ENCODE measurements at regions of chr11 and their contacts with region 1.

Region 1: DNA sequence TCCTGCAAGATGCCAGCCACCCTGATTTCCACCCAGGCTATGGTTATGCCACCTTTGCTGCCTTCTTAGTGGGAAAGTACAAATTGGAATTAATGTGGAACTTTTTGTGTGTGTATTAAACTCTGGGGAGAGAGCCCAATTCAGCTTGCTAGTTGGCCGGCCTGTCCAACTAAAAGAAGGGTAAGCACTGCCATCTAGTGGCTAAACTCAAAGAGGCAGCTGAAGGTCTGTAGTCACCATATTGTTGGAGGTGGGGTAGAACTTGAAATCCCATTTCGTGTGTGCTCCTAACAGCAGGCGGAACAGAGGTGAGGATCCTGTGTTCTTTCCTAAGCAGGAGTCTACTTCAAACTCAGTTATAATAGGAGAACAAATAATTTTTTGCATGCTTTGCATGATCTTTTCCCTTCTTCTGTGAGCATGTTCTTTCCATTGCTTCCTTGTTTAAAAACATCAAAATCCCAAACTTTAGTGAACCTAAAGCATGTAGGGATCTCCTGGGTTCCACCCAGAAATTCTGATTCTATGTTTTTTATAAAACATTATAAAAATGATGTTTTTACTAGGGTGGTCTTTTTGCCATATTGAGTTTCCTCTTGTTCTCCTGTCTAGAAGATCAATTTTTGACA is 138.8 kb upstream of the SORL1-AS1 start:
- DNase-seq: peak; percentile 82
- ATAC-seq: peak; percentile 71
- H3K4me3 ChIP-seq: peak overlapping the region; percentile 37; the same call in 1 of the 2 replicates
- H3K27ac ChIP-seq: peak overlapping the region; percentile 75
- H3K4me1 ChIP-seq: peaks cover 47% of the 10 kb centered on the region
- H3K27me3 ChIP-seq: no peaks in the 10 kb centered on the region
- CTCF ChIP-seq: peak; percentile 79 to 92 (median 88)
- EP300 ChIP-seq: no peak
- POLR2A ChIP-seq: no peak
- RAD21 ChIP-seq: peak; percentile 97

Region 2: GRCh38 chr11:121249039-121249663 is 342.4 kb before region 1 on chr11:
- CTCF ChIA-PET with region 1: interaction called, 9 read pairs
- POLR2A ChIA-PET with region 1: interaction called, 6 read pairs
- RAD21 ChIA-PET with region 1: no interaction called
- SMC1A ChIA-PET with region 1: no interaction called
- in situ Hi-C with region 1: loop called (anchors 5 kb)
- intact Hi-C with region 1: loop called (anchors 1 kb)
- DNase-seq: no peak
- ATAC-seq: peak; percentile 91
- H3K4me3 ChIP-seq: no peak overlapping the region
- H3K27ac ChIP-seq: no peak overlapping the region
- H3K4me1 ChIP-seq: no peaks in the 10 kb centered on the region
- H3K27me3 ChIP-seq: no peaks in the 10 kb centered on the region
- CTCF ChIP-seq: peak; percentile 60 to 66 (median 64); a peak in 5 of 6 replicates
- EP300 ChIP-seq: no peak
- POLR2A ChIP-seq: no peak
- RAD21 ChIP-seq: peak; percentile 65

Region 3: GRCh38 chr11:121328967-121329679 is 262.4 kb before region 1 on chr11:
- CTCF ChIA-PET with region 1: interaction called, 56 read pairs
- POLR2A ChIA-PET with region 1: interaction called, 4 read pairs
- RAD21 ChIA-PET with region 1: interaction called, 41 read pairs
- SMC1A ChIA-PET with region 1: interaction called, 16 read pairs
- in situ Hi-C with region 1: no loop called
- intact Hi-C with region 1: no loop called
- DNase-seq: no peak
- ATAC-seq: peak; percentile 68
- H3K4me3 ChIP-seq: no peak overlapping the region
- H3K27ac ChIP-seq: peak overlapping the region; percentile 13; the same call in 1 of the 2 replicates
- H3K4me1 ChIP-seq: peaks cover 18% of the 10 kb centered on the region
- H3K27me3 ChIP-seq: no peaks in the 10 kb centered on the region
- CTCF ChIP-seq: no peak
- EP300 ChIP-seq: no peak
- POLR2A ChIP-seq: no peak
- RAD21 ChIP-seq: no peak

Region 4: DNA sequence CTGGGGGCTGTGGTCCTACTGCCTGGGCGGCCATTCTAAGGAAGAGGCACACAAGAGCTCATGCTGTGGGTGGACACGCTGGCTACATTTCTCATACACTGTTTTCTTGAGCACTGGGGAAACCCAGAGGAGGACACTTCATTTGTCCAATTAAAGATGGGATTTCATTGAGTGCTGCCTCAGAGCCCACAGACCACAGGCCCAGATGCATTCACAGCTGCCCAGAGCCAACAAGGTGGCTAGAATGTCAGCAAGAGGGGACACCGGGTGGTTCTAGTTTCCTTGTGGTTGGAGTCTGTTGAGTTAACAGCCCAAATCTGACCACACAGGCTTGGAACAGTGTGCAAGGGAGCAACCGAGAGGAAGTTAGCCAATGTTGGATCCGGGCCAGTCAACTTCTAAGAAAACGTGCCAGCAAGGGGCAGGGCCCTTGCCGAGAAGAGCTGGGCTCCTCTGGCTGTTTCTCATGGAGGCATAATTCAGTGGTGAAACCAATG is 174.4 kb before region 1 on chr11:
- CTCF ChIA-PET with region 1: interaction called, 3 read pairs
- POLR2A ChIA-PET with region 1: no interaction called
- RAD21 ChIA-PET with region 1: no interaction called
- SMC1A ChIA-PET with region 1: interaction called, 5 read pairs
- in situ Hi-C with region 1: no loop called
- intact Hi-C with region 1: loop called (anchors 1 kb)
- DNase-seq: peak; percentile 92
- ATAC-seq: peak; percentile 87
- H3K4me3 ChIP-seq: no peak overlapping the region
- H3K27ac ChIP-seq: peak overlapping the region; percentile 9; the same call in 1 of the 2 replicates
- H3K4me1 ChIP-seq: peaks cover 45% of the 10 kb centered on the region
- H3K27me3 ChIP-seq: no peaks in the 10 kb centered on the region
- CTCF ChIP-seq: no peak
- EP300 ChIP-seq: peak; percentile 26 to 71; a peak in 2 of 4 replicates
- POLR2A ChIP-seq: no peak
- RAD21 ChIP-seq: no peak

Region 5: DNA sequence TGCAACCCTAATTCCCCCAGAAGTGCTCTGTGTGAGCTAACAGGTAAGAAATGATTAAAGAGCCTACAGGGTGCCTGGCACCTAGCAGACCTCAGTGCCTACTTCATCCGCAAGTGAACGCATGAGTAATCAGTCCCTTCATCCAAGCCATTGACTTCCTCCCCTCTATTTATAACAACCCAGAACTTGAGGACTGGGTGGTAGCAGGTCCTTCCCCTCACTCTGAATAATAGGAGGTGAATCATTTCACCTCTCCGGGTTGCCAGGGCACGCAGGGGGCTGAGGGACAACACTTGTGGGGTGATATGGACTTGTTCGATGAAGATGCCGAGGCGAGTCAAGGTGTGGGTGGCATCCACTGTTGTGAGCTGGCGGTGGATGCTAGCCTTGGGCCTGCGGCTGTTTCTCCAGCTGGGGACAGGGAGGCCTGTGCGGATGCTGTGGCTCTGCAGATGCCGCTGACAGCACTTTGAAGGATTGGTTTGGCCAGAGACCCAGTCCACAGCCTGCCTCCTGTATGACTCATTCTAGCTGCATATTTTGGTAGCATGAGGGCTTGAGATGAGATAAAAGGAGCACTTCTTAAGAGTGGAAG is 127.1 kb before region 1 on chr11:
- CTCF ChIA-PET with region 1: interaction called, 21 read pairs
- POLR2A ChIA-PET with region 1: no interaction called
- RAD21 ChIA-PET with region 1: interaction called, 31 read pairs
- SMC1A ChIA-PET with region 1: interaction called, 27 read pairs
- in situ Hi-C with region 1: no loop called
- intact Hi-C with region 1: loop called (anchors 1 kb)
- DNase-seq: no peak
- ATAC-seq: peak; percentile 64
- H3K4me3 ChIP-seq: peak overlapping the region; percentile 57; the same call in 1 of the 2 replicates
- H3K27ac ChIP-seq: peak overlapping the region; percentile 83
- H3K4me1 ChIP-seq: peaks cover 91% of the 10 kb centered on the region
- H3K27me3 ChIP-seq: no peaks in the 10 kb centered on the region
- CTCF ChIP-seq: no peak
- EP300 ChIP-seq: no peak; a peak in 1 of 4 replicates
- POLR2A ChIP-seq: peak; percentile 72
- RAD21 ChIP-seq: no peak

Region 6: DNA sequence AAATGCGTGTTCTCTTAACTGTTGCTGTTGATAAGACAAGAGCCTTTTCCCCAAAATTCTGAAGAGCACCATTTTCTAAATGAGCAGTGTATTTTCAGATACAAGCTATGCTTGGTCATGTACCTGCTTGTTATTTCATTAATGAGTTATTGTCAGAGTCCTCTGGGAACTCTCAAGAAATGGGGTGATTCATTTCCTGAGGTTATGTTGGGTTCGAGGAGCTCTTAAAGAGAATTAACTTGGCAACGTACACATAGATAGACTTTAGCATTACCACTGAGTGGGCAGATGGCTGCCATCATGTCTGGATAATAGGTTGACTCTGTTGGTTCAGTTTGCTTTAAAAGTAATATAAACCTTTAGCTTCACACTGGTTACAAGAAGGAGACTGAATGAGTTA is 50.9 kb before region 1 on chr11:
- CTCF ChIA-PET with region 1: interaction called, 3 read pairs
- POLR2A ChIA-PET with region 1: no interaction called
- RAD21 ChIA-PET with region 1: interaction called, 3 read pairs
- SMC1A ChIA-PET with region 1: interaction called, 3 read pairs
- in situ Hi-C with region 1: no loop called
- intact Hi-C with region 1: loop called (anchors 1 kb)
- DNase-seq: peak; percentile 50
- ATAC-seq: peak; percentile 42
- H3K4me3 ChIP-seq: no peak overlapping the region
- H3K27ac ChIP-seq: peak overlapping the region; percentile 74; the same call in 1 of the 2 replicates
- H3K4me1 ChIP-seq: peaks cover 62% of the 10 kb centered on the region
- H3K27me3 ChIP-seq: no peaks in the 10 kb centered on the region
- CTCF ChIP-seq: no peak
- EP300 ChIP-seq: no peak
- POLR2A ChIP-seq: no peak
- RAD21 ChIP-seq: no peak

Region 7: DNA sequence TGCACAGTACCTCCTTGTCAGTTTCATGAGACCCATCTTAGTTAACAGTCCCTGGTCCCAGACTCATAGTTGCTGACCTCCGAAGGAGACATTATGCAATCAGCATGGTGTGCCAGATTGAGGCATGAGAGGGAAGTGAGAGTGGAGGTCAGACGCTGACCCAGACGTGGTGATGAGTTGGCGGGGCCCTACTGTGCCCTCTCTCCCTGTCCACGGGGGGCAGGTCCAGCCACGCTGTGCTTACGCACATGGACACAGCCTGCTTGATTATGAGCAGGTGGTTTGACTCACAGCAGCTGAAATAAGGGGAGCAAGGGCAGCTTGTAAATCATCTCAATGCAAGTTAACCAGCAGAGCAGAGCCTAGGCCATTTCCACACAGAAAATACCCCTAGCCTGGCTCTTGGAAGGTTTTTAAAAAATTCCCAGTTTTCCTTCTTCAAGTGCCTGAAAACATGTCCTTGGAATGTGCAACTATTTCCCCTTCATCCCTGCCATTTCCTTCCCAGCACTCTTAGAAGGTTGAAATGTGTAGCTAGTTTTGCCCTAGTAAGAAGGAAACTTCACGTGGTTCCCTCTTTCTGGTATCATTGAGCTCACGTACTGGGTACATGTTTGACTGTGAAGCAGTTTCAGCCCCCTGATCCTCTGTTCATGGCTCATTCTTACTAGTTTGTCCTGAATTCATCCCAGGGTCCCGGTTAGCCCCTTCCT is 16.1 kb before region 1 on chr11:
- CTCF ChIA-PET with region 1: interaction called, 25 read pairs
- POLR2A ChIA-PET with region 1: interaction called, 4 read pairs
- RAD21 ChIA-PET with region 1: interaction called, 27 read pairs
- SMC1A ChIA-PET with region 1: interaction called, 11 read pairs
- in situ Hi-C with region 1: no loop called
- intact Hi-C with region 1: loop called (anchors 1 kb)
- DNase-seq: peak; percentile 74
- ATAC-seq: peak; percentile 93
- H3K4me3 ChIP-seq: no peak overlapping the region
- H3K27ac ChIP-seq: peak overlapping the region; percentile 75
- H3K4me1 ChIP-seq: peaks cover 56% of the 10 kb centered on the region
- H3K27me3 ChIP-seq: no peaks in the 10 kb centered on the region
- CTCF ChIP-seq: no peak
- EP300 ChIP-seq: peak; percentile 86 to 91
- POLR2A ChIP-seq: no peak; the same call in 1 of the 2 replicates
- RAD21 ChIP-seq: no peak

Region 8: DNA sequence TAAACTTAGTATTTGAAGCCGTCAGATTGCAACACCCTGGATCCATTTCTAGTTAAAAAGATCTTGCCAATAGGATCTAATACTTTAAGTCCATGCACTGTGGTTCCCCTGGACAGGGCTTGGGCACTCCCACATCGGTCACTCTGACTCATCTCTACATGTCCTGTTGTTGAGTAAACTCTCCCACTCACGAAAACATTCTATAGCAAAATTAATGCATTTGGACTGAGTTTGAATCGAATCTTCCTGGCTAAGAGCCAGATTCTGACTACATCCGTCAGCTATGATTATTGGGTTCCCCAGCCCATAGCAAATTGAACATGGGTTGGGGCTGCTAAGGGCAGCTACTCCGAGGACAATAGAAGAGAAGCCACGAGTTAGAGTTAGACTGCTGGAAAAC is 43.4 kb after region 1 on chr11:
- CTCF ChIA-PET with region 1: no interaction called
- POLR2A ChIA-PET with region 1: no interaction called
- RAD21 ChIA-PET with region 1: no interaction called
- SMC1A ChIA-PET with region 1: no interaction called
- in situ Hi-C with region 1: no loop called
- intact Hi-C with region 1: no loop called
- DNase-seq: no peak
- ATAC-seq: no peak; the same call in 2 of the 3 replicates
- H3K4me3 ChIP-seq: no peak overlapping the region
- H3K27ac ChIP-seq: no peak overlapping the region
- H3K4me1 ChIP-seq: no peaks in the 10 kb centered on the region
- H3K27me3 ChIP-seq: no peaks in the 10 kb centered on the region
- CTCF ChIP-seq: no peak
- EP300 ChIP-seq: no peak
- POLR2A ChIP-seq: no peak
- RAD21 ChIP-seq: no peak

Measured in GM12878 (cell line).